Aorta (tissue), 5 donors: ENCODE measurements at regions of chr5 and their contacts with region 1.

Region 1: DNA sequence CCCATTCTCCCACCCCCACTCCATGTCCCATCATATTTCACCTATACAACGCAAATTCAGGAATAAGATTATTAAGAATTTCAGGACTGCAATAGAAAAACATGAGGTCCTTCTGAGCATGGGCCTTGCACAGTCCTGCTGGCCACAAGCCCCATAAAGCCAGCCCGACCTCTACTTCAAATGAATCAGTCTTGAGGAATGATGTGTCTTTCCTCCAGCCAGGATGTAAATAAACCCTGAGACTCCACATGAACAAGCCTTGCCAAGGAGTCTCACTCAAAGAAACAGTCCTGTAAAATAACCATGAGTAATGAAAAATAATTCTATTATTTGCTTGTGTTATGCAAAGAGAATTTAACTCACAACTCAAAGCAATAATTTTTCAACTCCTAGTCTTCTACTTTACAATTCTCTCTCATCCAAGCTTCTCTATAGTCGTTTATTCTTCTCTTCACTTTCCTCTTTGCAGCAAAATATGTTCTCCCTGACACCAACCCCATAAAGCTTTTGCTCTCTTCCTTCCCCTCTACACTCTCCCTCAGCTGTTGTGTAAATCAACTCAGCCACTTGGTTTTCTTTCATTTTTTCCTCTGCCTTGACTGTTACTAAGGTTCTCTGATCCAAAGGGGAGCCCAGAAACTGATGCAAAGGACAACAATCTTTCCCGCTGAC is 140.1 kb upstream of the MOCS2 start:
- DNase-seq: peak in 1 of 2 donors; percentile 78
- ATAC-seq: peak; percentile 81
- H3K4me3 ChIP-seq: no peak overlapping the region
- H3K27ac ChIP-seq: peak overlapping the region in 1 of 2 donors; percentile 64
- H3K4me1 ChIP-seq: peaks cover 3 to 6% of the 10 kb centered on the region in 2 donors
- H3K27me3 ChIP-seq: no peaks in the 10 kb centered on the region

Region 2: GRCh38 chr5:53335115-53335514 is 85.5 kb after region 1 on chr5:
- intact Hi-C with region 1: loop called in 1 of 2 experiments (anchors 10 kb)
- DNase-seq: no peak
- ATAC-seq: no peak
- H3K4me3 ChIP-seq: no peak overlapping the region
- H3K27ac ChIP-seq: peak overlapping the region in 1 of 2 donors; percentile 11
- H3K4me1 ChIP-seq: peaks cover 4 to 9% of the 10 kb centered on the region in 2 donors
- H3K27me3 ChIP-seq: no peaks in the 10 kb centered on the region

Region 3: GRCh38 chr5:53359916-53360517 is 110.4 kb after region 1 on chr5:
- intact Hi-C with region 1: loop called in 1 of 2 experiments (anchors 5 kb)
- DNase-seq: no peak
- ATAC-seq: no peak
- H3K4me3 ChIP-seq: no peak overlapping the region
- H3K27ac ChIP-seq: no peak overlapping the region
- H3K4me1 ChIP-seq: peaks cover 2 to 13% of the 10 kb centered on the region in 2 donors
- H3K27me3 ChIP-seq: no peaks in the 10 kb centered on the region